ENCODE measurements at regions of chr12 and their contacts with region 1.

Region 1: GRCh38 chr12:109428037-109428629 is 49.0 kb downstream of the KCTD10 start:
- DNase-seq: peak; percentile 62 to 83 (median 76)
- H3K4me3 ChIP-seq: no peak overlapping the region
- H3K27ac ChIP-seq: no peak overlapping the region
- H3K27me3 ChIP-seq: no peaks in the 10 kb centered on the region
- CTCF ChIP-seq: peak; percentile 82 to 99 (median 95)

Region 2: DNA sequence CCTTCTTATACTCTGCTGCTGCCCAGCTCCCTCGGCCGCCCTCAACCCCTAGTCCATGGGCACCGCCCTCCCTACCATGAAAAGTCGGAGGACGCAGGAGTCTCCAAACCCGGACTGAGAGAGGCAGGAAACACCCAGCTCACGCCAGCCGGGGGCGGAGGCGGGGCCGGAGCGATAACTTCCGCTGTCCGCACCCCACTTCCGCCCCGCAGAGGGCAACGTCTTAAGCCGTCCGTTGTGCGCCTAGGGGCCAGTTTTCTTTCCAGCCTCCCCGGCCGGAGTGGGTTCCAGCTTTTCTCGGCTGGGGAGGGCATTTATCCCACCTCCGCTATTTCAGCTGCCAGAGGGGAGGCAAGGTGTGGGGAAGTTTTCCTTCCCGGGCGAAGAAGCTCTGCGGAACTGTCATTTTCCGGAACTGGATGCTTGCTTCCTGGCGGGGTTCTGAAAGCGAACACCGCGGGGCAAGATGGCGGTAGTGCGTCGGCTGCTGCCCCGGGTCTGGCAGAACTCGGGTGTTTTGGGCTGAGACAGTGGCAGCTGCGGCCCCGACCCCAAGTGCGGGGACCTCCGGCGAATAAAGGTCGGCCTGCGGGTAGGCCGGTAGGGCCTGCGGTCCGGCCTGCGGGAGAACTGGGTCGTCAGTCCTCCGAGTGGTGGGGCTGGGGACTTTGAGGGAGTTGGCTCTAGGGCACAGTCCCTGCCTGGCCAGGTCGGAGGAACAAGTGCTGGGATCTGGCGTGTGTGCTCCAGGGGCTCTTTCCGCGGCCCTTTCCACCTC is 49.2 kb after region 1 on chr12 and contains the starts of genes KCTD10 and UBE3B:
- intact Hi-C with region 1: loop called in 1 of 2 experiments (anchors 2 kb)
- DNase-seq: peak; percentile 72 to 90 (median 83)
- H3K4me3 ChIP-seq: peak within 1 kb of the TSS; percentile 71 to 100 (median 95)
- H3K27ac ChIP-seq: peak within 1 kb of the TSS; percentile 86 to 100 (median 97)
- H3K27me3 ChIP-seq: no peaks in the 10 kb centered on the region
- CTCF ChIP-seq: peak in 51 of 56 donors; percentile 3 to 66 (median 42)
- total RNA-seq, gene KCTD10: 32.1 to 62.5 (median 42.9) TPM
- total RNA-seq, gene UBE3B: 39.2 to 68.5 (median 52.9) TPM

Region 3: GRCh38 chr12:109597795-109598427 is 169.8 kb after region 1 on chr12:
- intact Hi-C with region 1: loop called in 1 of 2 experiments (anchors 10 kb)
- DNase-seq: peak; percentile 90 to 92 (median 91)
- H3K4me3 ChIP-seq: peak overlapping the region in 15 of 59 donors; percentile 2 to 37 (median 19)
- H3K27ac ChIP-seq: peak overlapping the region in 58 of 59 donors; percentile 7 to 91 (median 85)
- H3K27me3 ChIP-seq: no peaks in the 10 kb centered on the region
- CTCF ChIP-seq: peak; percentile 89 to 99 (median 97)